ENCODE measurements at regions of chr21 and their contacts with region 1.

Region 1: GRCh38 chr21:34986561-34987500 is 62.3 kb downstream of the RUNX1 start:
- DNase-seq: peak; percentile 54 to 87 (median 66)
- H3K4me3 ChIP-seq: peak overlapping the region in 1 of 2 donors; percentile 1
- H3K4me3 Mint-ChIP-seq: peak overlapping the region; percentile 74 to 93 (median 80)
- H3K27ac ChIP-seq: peak overlapping the region; percentile 54
- H3K27ac Mint-ChIP-seq: peak overlapping the region; percentile 93 to 97 (median 95)
- H3K4me1 ChIP-seq: peaks cover 100% of the 10 kb centered on the region
- H3K4me1 Mint-ChIP-seq: peaks cover 36 to 95% (median 87%) of the 10 kb centered on the region in 4 donors
- H3K27me3 ChIP-seq: no peaks in the 10 kb centered on the region
- H3K27me3 Mint-ChIP-seq: no peaks in the 10 kb centered on the region

Region 2: DNA sequence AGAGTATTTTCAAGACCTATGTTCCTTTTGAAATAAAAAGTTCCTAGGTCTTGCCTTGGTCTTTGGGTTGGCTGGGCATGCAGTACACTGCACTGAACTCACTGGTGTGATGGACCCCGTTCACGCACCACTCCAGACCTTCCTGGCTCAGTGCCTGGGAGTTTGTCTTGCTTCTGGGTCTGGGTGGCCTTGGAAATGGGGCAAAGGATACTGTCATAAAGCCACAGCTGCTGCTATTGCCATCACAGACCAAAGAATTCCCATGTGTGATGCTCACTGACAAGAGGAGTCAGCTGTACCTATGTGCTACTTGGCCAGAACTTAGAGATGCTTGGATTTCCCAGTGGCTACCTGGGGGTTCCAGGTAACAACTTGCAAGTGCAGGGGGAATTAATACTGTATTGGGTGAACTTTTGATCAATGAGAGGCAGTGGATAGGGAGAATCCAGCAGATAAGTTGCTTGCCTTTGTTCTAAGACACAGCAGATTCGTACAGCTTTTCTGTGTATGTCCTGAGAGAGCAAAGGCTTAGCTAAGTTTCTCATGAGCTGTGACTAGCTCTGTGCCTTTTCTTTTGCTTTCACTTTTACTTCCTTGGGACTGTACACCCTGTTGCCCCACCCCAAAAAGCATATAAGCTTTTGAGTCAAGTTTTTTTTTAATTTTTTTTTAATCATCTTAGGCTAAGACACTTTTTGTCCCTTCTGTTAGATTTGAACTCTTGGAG is 53.1 kb before region 1 on chr21:
- CTCF ChIA-PET with region 1: interaction called, 10 read pairs
- POLR2A ChIA-PET with region 1: interaction called, 28 read pairs
- intact Hi-C with region 1: no loop called
- DNase-seq: peak; percentile 62 to 75 (median 73)
- H3K4me3 ChIP-seq: peak overlapping the region; percentile 20 to 44
- H3K4me3 Mint-ChIP-seq: peak overlapping the region; percentile 66 to 92 (median 86)
- H3K27ac ChIP-seq: peak overlapping the region; percentile 73
- H3K27ac Mint-ChIP-seq: peak overlapping the region; percentile 94 to 99 (median 96)
- H3K4me1 ChIP-seq: peaks cover 90% of the 10 kb centered on the region
- H3K4me1 Mint-ChIP-seq: peaks cover 75 to 91% (median 82%) of the 10 kb centered on the region in 4 donors
- H3K27me3 ChIP-seq: no peaks in the 10 kb centered on the region
- H3K27me3 Mint-ChIP-seq: no peaks in the 10 kb centered on the region

Region 3: GRCh38 chr21:34974162-34974981 is 12.5 kb before region 1 on chr21:
- CTCF ChIA-PET with region 1: interaction called, 16 read pairs
- POLR2A ChIA-PET with region 1: interaction called, 46 read pairs
- intact Hi-C with region 1: loop called (anchors 1 kb)
- DNase-seq: peak; percentile 74 to 81 (median 79)
- H3K4me3 ChIP-seq: peak overlapping the region in 1 of 2 donors; percentile 21
- H3K4me3 Mint-ChIP-seq: peak overlapping the region; percentile 38 to 92 (median 83)
- H3K27ac ChIP-seq: peak overlapping the region; percentile 37
- H3K27ac Mint-ChIP-seq: peak overlapping the region; percentile 84 to 98 (median 93)
- H3K4me1 ChIP-seq: peaks cover 82% of the 10 kb centered on the region
- H3K4me1 Mint-ChIP-seq: peaks cover 72 to 94% (median 82%) of the 10 kb centered on the region in 4 donors
- H3K27me3 ChIP-seq: no peaks in the 10 kb centered on the region
- H3K27me3 Mint-ChIP-seq: no peaks in the 10 kb centered on the region

Region 4: DNA sequence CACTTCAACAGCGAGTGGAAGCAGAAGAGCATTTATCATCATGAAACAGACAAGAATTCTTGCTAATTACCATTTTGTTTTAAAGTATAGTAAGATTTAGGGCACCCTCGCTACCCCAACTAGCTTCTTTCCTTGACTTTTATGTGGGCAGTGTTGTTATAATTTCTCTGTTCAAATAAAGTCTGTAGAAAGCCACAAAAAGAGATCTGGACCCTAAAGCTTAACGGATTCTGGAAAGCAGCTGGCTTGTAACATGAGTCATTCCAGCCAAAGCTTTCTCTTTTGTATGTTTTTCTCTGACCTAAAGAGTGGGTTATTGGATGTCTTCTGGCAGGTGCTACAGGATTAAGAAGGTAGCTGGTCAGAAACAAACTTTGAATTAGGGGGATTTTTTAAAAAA is 24.9 kb after region 1 on chr21:
- CTCF ChIA-PET with region 1: interaction called, 3 read pairs
- POLR2A ChIA-PET with region 1: interaction called, 11 read pairs
- intact Hi-C with region 1: no loop called
- DNase-seq: no peak
- H3K4me3 ChIP-seq: no peak overlapping the region
- H3K4me3 Mint-ChIP-seq: peak overlapping the region; percentile 7 to 82 (median 28)
- H3K27ac ChIP-seq: no peak overlapping the region
- H3K27ac Mint-ChIP-seq: peak overlapping the region; percentile 25 to 62 (median 54)
- H3K4me1 ChIP-seq: peaks cover 97% of the 10 kb centered on the region
- H3K4me1 Mint-ChIP-seq: peaks cover 80 to 94% (median 87%) of the 10 kb centered on the region in 4 donors
- H3K27me3 ChIP-seq: no peaks in the 10 kb centered on the region
- H3K27me3 Mint-ChIP-seq: no peaks in the 10 kb centered on the region

Region 5: DNA sequence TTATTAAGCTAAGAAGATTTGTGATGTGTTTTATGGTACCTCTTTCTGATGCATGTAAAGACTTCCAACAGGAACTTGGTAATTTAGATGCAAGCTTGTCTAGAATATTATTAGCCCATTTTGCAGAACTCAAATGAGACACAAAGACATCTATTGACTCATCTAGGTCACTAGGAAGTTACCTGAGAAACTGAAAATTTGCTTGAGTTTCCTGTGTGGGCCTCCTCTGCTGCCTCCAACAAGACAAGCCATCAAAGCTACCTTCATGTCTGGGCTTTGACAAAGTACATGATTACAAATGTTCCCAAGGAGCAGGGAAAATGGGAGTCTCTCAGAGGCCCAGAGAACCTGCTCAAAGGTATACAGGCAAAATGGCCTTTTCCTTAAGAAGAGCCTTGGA is 56.7 kb after region 1 on chr21:
- CTCF ChIA-PET with region 1: interaction called, 9 read pairs
- POLR2A ChIA-PET with region 1: interaction called, 51 read pairs
- intact Hi-C with region 1: loop called (anchors 1 kb)
- DNase-seq: peak in 4 of 5 donors; percentile 55 to 65 (median 59)
- H3K4me3 ChIP-seq: peak overlapping the region in 1 of 2 donors; percentile 73
- H3K4me3 Mint-ChIP-seq: peak overlapping the region; percentile 84 to 99 (median 96)
- H3K27ac ChIP-seq: peak overlapping the region; percentile 82
- H3K27ac Mint-ChIP-seq: peak overlapping the region; percentile 92 to 100 (median 99)
- H3K4me1 ChIP-seq: peaks cover 77% of the 10 kb centered on the region
- H3K4me1 Mint-ChIP-seq: peaks cover 58 to 98% (median 72%) of the 10 kb centered on the region in 4 donors
- H3K27me3 ChIP-seq: no peaks in the 10 kb centered on the region
- H3K27me3 Mint-ChIP-seq: peaks cover 1 to 3% of the 10 kb centered on the region in 2 donors

Region 6: GRCh38 chr21:35189077-35189863 is 202.4 kb after region 1 on chr21:
- CTCF ChIA-PET with region 1: no interaction called
- POLR2A ChIA-PET with region 1: no interaction called
- intact Hi-C with region 1: no loop called
- DNase-seq: no peak
- H3K4me3 ChIP-seq: no peak overlapping the region
- H3K4me3 Mint-ChIP-seq: no peak overlapping the region
- H3K27ac ChIP-seq: no peak overlapping the region
- H3K27ac Mint-ChIP-seq: no peak overlapping the region
- H3K4me1 ChIP-seq: no peaks in the 10 kb centered on the region
- H3K4me1 Mint-ChIP-seq: no peaks in the 10 kb centered on the region
- H3K27me3 ChIP-seq: no peaks in the 10 kb centered on the region
- H3K27me3 Mint-ChIP-seq: peaks cover 6 to 10% of the 10 kb centered on the region in 2 donors

Measured in CD4-positive, alpha-beta memory T cell (primary cell).